CD8-positive, alpha-beta memory T cell (primary cell): ENCODE measurements at regions of chr3 and their contacts with region 1.

Region 1: DNA sequence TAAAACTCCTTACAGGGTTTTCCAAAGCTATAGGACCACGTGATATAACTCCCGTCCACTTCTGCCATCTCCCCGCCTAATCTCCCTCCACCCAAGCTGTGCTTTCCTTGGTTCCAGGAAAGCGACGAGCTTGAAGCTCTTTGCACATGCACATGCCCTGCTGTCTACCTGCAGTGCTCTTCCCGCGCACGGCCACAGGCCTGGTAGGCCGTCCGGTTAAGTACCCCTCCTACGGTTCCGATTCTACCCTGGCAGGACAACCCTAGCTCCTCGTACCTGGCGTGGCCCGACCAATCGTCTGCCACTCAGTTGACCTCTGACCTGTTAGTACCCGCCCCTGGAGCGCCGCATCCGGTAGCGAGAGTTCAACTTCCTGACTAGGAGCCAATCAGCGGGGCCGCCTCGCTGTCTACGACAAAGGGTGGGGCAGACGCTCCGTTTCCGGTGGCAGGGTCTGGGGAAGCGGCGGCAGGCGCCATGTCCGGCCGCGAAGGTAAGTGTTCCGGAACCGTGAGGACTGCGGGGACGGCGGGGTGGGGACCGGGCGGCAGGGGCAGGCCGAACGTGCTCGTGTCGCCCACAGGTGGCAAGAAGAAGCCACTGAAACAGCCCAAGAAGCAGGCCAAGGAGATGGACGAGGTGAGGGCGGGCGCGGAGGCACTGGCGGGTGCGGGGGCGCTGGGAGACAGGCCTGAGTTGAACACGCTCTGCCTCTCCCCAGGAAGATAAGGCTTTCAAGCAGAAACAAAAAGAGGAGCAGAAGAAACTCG is at the starts of genes CCDC51 and TMA7:
- DNase-seq: peak; percentile 96 to 99 (median 97)
- H3K4me3 ChIP-seq: peak within 1 kb of the TSS; percentile 62
- H3K4me3 Mint-ChIP-seq: peak within 1 kb of the TSS; percentile 84 to 99 (median 93)
- H3K27ac ChIP-seq: peak within 1 kb of the TSS; percentile 96
- H3K27ac Mint-ChIP-seq: peak within 1 kb of the TSS in 6 of 8 donors; percentile 96 to 100 (median 100)
- H3K4me1 ChIP-seq: peaks cover 36% of the 10 kb centered on the region
- H3K4me1 Mint-ChIP-seq: peaks cover 28 to 46% (median 31%) of the 10 kb centered on the region in 3 donors
- H3K27me3 ChIP-seq: no peaks in the 10 kb centered on the region
- H3K27me3 Mint-ChIP-seq: no peaks in the 10 kb centered on the region
- total RNA-seq, gene CCDC51: 24.2 to 26.0 TPM
- total RNA-seq, gene TMA7: 420 to 494 TPM

Region 2: DNA sequence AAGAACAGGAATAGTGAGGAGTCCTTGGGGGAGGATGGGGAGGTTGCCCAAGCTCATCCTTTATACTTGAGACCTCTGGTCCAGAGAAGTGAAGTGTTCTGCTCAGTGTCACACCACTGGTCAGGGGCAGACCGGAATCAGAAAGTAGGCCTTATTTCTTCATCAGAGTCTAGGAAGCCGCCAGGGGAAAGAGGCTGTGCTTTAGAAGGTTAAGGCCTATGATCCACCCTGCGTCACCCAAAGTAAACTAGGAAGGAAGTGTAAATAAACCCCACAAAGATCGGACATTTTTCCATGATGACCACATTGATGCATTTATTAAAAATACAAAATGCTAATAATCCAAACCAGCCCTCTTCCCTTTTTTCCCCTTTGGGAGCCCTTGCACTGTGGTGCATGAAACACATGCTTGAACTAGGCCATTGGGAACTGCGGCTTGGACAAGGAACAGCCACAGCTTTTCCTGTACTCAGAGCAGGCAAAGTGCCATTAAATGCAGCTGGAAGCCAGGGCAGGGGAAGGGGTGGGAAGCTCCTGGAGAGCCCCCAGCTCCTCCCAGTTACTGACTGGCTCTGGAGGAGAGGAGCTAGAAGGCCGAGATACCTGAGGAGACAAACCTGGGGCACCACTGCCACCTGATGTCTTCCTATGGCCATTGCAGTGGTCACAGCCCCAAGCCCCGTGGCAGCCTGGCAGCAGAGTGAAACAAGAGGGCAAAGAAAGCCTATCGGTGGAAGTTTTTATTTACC is 288.8 kb before region 1 on chr3:
- CTCF ChIA-PET with region 1: no interaction called
- POLR2A ChIA-PET with region 1: no interaction called
- DNase-seq: peak; percentile 12 to 71 (median 30)
- H3K4me3 ChIP-seq: no peak overlapping the region
- H3K4me3 Mint-ChIP-seq: no peak overlapping the region
- H3K27ac ChIP-seq: no peak overlapping the region
- H3K27ac Mint-ChIP-seq: no peak overlapping the region
- H3K4me1 ChIP-seq: no peaks in the 10 kb centered on the region
- H3K4me1 Mint-ChIP-seq: no peaks in the 10 kb centered on the region
- H3K27me3 ChIP-seq: no peaks in the 10 kb centered on the region
- H3K27me3 Mint-ChIP-seq: peaks cover 0 to 4% of the 10 kb centered on the region in 2 donors

Region 3: DNA sequence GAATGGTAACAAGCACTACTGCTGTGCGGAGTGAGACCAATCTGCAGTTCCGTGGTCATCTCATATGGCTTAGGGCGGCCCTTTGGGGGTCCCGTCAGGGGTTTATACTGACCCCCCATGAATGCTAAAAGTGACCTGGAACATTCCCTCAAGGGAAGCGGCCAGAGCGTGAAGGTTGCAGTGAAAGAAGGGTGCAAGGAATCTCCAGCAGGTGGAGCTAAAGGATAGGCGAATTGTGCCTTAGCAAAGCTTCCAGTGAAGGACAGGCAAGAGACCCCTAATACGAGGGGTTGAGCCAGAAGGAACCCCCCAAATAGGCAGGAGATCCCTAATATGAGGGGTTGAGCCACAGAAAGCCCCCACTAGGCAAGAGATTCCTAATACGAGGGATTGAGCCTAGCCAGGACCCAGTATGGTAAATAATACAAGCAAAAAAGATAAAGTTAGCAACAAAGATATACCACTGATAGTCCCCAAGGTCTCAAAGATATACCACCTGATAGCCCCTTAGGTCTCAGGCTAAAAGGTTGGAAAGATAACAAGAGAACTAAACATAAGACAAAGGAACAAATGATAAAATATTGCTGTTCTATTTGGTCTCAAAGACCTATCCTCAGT is 166.3 kb before region 1 on chr3:
- CTCF ChIA-PET with region 1: interaction called, 33 read pairs
- POLR2A ChIA-PET with region 1: interaction called, 3 read pairs
- DNase-seq: peak; percentile 13 to 62 (median 50)
- H3K4me3 ChIP-seq: no peak overlapping the region
- H3K4me3 Mint-ChIP-seq: no peak overlapping the region
- H3K27ac ChIP-seq: no peak overlapping the region
- H3K27ac Mint-ChIP-seq: peak overlapping the region in 2 of 8 donors; percentile 29 to 47
- H3K4me1 ChIP-seq: peaks cover 16% of the 10 kb centered on the region
- H3K4me1 Mint-ChIP-seq: peaks cover 13 to 17% (median 16%) of the 10 kb centered on the region in 3 donors
- H3K27me3 ChIP-seq: no peaks in the 10 kb centered on the region
- H3K27me3 Mint-ChIP-seq: peaks cover 0 to 4% of the 10 kb centered on the region in 2 donors

Region 4: DNA sequence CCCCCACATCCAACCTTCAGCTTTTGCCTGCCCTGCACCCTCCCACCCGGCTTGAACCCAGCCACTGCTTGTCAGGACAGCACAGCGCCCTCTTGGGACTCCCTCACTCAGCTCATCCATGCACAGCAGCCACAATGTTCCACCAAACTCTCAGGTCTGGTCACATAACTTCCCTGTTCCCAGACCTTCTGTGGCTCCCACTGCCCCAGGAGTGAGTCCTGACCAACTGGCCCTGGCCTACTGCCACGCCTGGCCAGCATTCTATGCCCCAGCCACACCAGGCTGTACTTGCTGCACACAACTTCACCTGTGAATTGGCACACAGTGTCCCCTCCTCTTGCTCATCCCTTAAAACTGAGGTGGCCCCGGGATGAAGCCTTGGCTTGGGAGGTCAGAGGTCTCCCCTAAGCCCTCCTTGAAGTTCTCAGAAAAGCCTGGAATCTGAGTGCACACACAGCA is 31.2 kb before region 1 on chr3:
- CTCF ChIA-PET with region 1: interaction called, 176 read pairs
- POLR2A ChIA-PET with region 1: no interaction called
- DNase-seq: peak in 2 of 5 donors; percentile 0 to 41
- H3K4me3 ChIP-seq: no peak overlapping the region
- H3K4me3 Mint-ChIP-seq: no peak overlapping the region
- H3K27ac ChIP-seq: no peak overlapping the region
- H3K27ac Mint-ChIP-seq: no peak overlapping the region
- H3K4me1 ChIP-seq: no peaks in the 10 kb centered on the region
- H3K4me1 Mint-ChIP-seq: no peaks in the 10 kb centered on the region
- H3K27me3 ChIP-seq: no peaks in the 10 kb centered on the region
- H3K27me3 Mint-ChIP-seq: peaks cover 0 to 2% of the 10 kb centered on the region in 2 donors

Region 5: GRCh38 chr3:48472915-48473616 is 33.1 kb after region 1 on chr3:
- CTCF ChIA-PET with region 1: interaction called, 69 read pairs
- POLR2A ChIA-PET with region 1: interaction called, 18 read pairs
- DNase-seq: peak; percentile 91 to 96 (median 94)
- H3K4me3 ChIP-seq: peak overlapping the region; percentile 98
- H3K4me3 Mint-ChIP-seq: peak overlapping the region; percentile 90 to 96 (median 95)
- H3K27ac ChIP-seq: peak overlapping the region; percentile 99
- H3K27ac Mint-ChIP-seq: peak overlapping the region; percentile 92 to 99 (median 98)
- H3K4me1 ChIP-seq: peaks cover 58% of the 10 kb centered on the region
- H3K4me1 Mint-ChIP-seq: peaks cover 47 to 79% (median 55%) of the 10 kb centered on the region in 3 donors
- H3K27me3 ChIP-seq: no peaks in the 10 kb centered on the region
- H3K27me3 Mint-ChIP-seq: no peaks in the 10 kb centered on the region

Region 6: GRCh38 chr3:48507351-48508061 is 67.5 kb after region 1 on chr3:
- CTCF ChIA-PET with region 1: interaction called, 63 read pairs
- POLR2A ChIA-PET with region 1: interaction called, 8 read pairs
- DNase-seq: peak; percentile 60 to 86 (median 71)
- H3K4me3 ChIP-seq: no peak overlapping the region
- H3K4me3 Mint-ChIP-seq: peak overlapping the region in 5 of 7 donors; percentile 18 to 62 (median 46)
- H3K27ac ChIP-seq: no peak overlapping the region
- H3K27ac Mint-ChIP-seq: peak overlapping the region; percentile 72 to 89 (median 85)
- H3K4me1 ChIP-seq: peaks cover 38% of the 10 kb centered on the region
- H3K4me1 Mint-ChIP-seq: peaks cover 31 to 48% (median 46%) of the 10 kb centered on the region in 3 donors
- H3K27me3 ChIP-seq: no peaks in the 10 kb centered on the region
- H3K27me3 Mint-ChIP-seq: peaks cover 0 to 9% of the 10 kb centered on the region in 2 donors

Region 7: DNA sequence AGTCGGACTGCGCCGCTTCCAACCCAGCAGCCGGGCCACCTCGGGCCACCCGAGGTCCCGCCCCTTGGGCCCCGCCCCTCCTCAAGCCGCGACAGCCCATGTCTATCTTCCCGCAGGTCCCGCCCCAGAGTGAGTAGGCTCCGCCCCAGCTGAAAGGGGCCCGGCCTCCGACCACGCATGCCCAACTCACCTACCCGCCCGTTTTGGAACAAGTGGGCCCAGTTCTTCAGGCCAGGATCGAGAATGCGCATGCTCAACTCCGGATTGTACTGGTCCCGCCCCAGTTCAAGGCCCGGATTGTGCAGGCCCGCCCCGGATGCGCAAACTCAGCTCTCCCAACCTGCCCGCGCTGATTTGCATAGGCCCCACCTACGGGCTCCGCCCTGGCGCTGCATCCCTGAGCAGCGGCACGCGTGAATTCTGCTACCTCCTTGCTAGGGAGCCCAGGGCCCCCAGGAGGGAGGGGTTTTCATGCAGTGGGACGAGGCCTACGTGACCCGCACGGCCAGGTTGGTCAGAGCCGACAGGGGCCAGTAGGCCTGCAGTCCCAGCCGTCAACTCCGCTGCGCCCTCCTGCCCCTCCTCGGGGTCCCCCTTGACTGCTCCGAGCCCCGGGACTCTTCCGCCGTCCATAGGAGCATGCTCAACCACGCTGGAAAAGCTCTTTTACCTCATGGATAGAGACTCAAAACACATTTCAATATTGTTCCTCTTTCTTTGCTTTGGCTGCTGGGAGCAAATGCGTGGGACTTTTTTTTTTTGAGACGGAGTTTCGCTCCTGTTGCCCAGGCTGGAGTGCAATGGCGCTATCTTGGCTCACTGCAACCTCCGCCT is 117.0 kb after region 1 on chr3 and contains the start of gene PFKFB4:
- CTCF ChIA-PET with region 1: interaction called, 40 read pairs
- POLR2A ChIA-PET with region 1: interaction called, 6 read pairs
- DNase-seq: peak; percentile 98 to 100 (median 99)
- H3K4me3 ChIP-seq: peak within 1 kb of the TSS; percentile 85
- H3K4me3 Mint-ChIP-seq: peak within 1 kb of the TSS; percentile 62 to 89 (median 80)
- H3K27ac ChIP-seq: peak within 1 kb of the TSS; percentile 51
- H3K27ac Mint-ChIP-seq: peak within 1 kb of the TSS in 7 of 8 donors; percentile 3 to 83 (median 56)
- H3K4me1 ChIP-seq: peaks cover 6% of the 10 kb centered on the region
- H3K4me1 Mint-ChIP-seq: peaks cover 9 to 18% (median 13%) of the 10 kb centered on the region in 3 donors
- H3K27me3 ChIP-seq: no peaks in the 10 kb centered on the region
- H3K27me3 Mint-ChIP-seq: no peaks in the 10 kb centered on the region
- total RNA-seq, gene PFKFB4: 1.8 to 2.2 TPM

Region 8: DNA sequence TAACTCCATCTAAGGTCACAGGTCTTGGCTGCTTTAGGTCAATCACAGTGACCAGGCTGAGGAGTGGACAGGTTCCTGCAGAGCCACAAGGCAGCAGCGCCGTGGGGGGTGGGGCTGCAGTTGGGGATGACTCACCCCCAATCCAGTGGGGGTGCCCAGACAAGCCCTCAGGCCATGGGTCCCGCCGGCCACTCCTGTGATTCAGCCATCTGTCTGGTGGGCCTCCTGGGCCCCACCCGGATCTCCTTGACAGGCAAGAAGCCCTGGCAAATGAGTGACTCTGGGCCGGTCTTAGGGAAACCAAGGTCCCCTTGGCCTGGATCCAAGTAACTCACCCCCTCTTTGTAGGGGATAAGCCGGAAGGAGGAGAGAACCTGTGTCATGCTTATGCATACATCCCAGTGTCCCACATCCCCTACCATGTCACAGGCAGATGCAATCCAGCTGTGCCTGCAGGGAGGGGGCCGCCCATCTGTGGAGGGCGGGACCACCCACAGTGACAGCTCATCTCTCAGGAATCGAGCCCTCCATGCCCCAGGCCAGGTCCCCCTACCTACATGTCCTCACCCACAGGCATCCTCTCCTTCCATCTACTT is 155.6 kb after region 1 on chr3:
- CTCF ChIA-PET with region 1: no interaction called
- POLR2A ChIA-PET with region 1: no interaction called
- DNase-seq: no peak
- H3K4me3 ChIP-seq: no peak overlapping the region
- H3K4me3 Mint-ChIP-seq: no peak overlapping the region
- H3K27ac ChIP-seq: no peak overlapping the region
- H3K27ac Mint-ChIP-seq: peak overlapping the region in 1 of 8 donors; percentile 94
- H3K4me1 ChIP-seq: no peaks in the 10 kb centered on the region
- H3K4me1 Mint-ChIP-seq: peaks cover 0 to 11% (median 2%) of the 10 kb centered on the region in 3 donors
- H3K27me3 ChIP-seq: no peaks in the 10 kb centered on the region
- H3K27me3 Mint-ChIP-seq: peaks cover 15 to 35% of the 10 kb centered on the region in 2 donors